Heart right ventricle (tissue), 16 donors: ENCODE measurements at regions of chr15 and their contacts with region 1.

Region 1: GRCh38 chr15:38093931-38094330 is 158.7 kb upstream of the SPRED1 start:
- DNase-seq: no peak
- ATAC-seq: no peak
- H3K4me3 ChIP-seq: no peak overlapping the region
- H3K27ac ChIP-seq: no peak overlapping the region
- H3K4me1 ChIP-seq: peaks cover 0 to 5% (median 0%) of the 10 kb centered on the region in 9 donors
- H3K27me3 ChIP-seq: no peaks in the 10 kb centered on the region
- CTCF ChIP-seq: no peak

Region 2: DNA sequence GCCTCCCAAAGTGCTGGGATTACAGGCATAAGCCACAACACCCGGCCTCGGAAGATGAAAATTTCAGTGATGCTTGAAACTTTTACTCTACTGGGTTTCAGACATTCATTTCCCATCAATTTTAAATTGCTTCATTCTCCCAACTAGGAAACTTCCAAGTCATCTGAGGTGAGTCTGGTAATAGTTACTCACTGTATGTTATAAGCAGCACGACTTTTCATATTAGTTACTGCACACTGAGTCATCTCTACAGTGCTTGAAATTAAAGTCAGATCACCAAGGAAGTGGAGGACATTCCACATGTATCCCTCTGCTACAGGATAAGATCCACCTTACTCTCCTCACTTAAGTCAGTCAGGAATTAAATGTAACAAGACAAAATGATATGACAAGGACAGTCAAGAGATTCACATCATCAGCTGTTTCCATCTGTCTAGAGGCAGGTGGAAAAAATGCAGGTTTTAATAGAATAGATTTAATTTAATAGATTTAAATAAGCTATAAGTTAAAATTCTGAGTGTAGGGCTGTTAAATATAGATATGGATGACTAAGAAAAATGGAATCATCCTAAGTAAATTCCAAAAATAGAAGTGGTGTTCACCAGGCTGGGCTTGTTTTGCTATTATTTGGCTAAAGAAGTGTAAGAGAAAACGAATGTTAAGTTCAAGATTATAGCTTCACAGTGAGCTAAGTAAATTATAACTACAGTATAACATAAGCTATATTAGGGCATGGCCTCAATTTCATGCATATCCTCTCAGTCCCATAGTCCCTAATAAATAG is 55.1 kb before region 1 on chr15:
- intact Hi-C with region 1: loop called in 1 of 10 experiments (anchors 10 kb)
- DNase-seq: no peak
- ATAC-seq: no peak
- H3K4me3 ChIP-seq: no peak overlapping the region
- H3K27ac ChIP-seq: no peak overlapping the region
- H3K4me1 ChIP-seq: peaks cover 0 to 26% (median 5%) of the 10 kb centered on the region in 9 donors
- H3K27me3 ChIP-seq: peaks cover 0 to 6% (median 0%) of the 10 kb centered on the region in 7 donors
- CTCF ChIP-seq: no peak